OCI-LY7 (cell line): ENCODE measurements at regions of chr16 and their contacts with region 1.

Region 1: DNA sequence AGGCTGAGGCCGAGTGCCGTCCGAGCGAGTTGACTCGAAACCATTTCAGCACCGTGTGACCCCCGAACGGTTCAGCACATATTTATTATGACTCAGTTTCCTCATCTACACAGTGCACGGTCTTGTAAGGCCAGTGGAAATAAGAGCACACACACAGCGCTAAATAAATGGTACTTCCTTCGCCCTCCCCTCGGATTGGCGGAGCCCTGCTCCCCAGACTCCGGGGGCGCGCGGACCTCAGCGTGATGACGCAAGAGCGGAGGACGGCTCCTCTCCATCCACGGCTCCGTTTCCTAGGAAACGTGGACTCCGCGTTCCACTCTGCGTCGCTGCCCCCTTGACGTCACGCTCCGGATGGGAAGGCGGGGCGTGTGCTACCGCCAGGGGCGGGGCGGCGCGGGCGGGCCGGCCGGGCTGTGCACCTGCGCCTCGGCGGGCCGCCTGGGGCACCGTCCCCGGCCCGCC is at the start of gene PARD6A:
- DNase-seq: peak; percentile 100
- H3K4me3 ChIP-seq: peak within 1 kb of the TSS; percentile 83
- H3K27ac ChIP-seq: peak within 1 kb of the TSS; percentile 81
- H3K4me1 ChIP-seq: peaks cover 15% of the 10 kb centered on the region
- CTCF ChIP-seq: no peak
- total RNA-seq, gene PARD6A: 12.3 and 23.3 TPM in 2 replicates

Region 2: GRCh38 chr16:67480833-67481560 is 179.6 kb before region 1 on chr16 and contains the start of gene ATP6V0D1:
- CTCF ChIA-PET with region 1: no interaction called
- POLR2A ChIA-PET with region 1: no interaction called
- intact Hi-C with region 1: loop called (anchors 2 kb)
- DNase-seq: peak; percentile 99
- H3K4me3 ChIP-seq: peak within 1 kb of the TSS; percentile 88
- H3K27ac ChIP-seq: peak within 1 kb of the TSS; percentile 72
- H3K4me1 ChIP-seq: peaks cover 39% of the 10 kb centered on the region
- CTCF ChIP-seq: peak; percentile 88
- total RNA-seq, gene ATP6V0D1: 13.5 and 24.4 TPM in 2 replicates

Region 3: DNA sequence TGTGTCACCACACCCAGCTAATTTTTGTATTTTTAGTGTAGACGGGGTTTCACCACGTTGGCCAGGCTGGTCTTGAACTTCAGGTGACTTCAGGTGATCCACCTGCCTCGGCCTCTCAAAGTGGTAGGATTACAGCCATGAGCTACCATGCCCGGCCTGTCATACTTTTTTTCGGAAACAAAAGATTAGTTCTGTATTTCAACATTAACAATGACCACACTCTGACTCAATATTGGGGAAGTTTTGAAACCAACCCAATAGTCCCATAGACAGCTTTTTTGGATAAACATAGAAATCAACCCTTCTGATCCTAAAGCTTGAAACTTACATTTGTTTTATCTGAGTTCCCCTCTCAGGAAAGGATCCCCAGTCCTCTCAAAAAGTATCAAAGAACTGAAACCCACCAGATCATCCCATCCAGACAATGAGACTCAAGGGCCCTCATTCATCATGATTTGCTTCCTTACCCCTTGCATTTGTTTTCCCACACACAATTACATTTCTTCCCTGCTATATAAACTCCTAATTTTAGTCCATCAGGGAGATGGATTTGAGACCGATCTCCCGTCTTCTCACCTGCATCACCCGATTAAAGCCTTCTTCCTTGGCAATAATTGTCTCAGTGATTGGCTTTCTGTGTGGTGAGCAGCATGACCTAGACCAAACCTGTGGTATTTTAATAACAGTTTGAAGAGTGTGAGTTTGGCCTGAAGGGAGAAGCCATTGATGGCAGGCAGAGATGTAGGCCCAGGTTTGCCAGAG is 170.1 kb before region 1 on chr16:
- CTCF ChIA-PET with region 1: no interaction called
- POLR2A ChIA-PET with region 1: interaction called, 4 read pairs
- intact Hi-C with region 1: loop called (anchors 2 kb)
- DNase-seq: no peak
- H3K4me3 ChIP-seq: no peak overlapping the region
- H3K27ac ChIP-seq: no peak overlapping the region
- H3K4me1 ChIP-seq: peaks cover 68% of the 10 kb centered on the region
- CTCF ChIP-seq: no peak

Region 4: GRCh38 chr16:67641779-67642708 is 18.6 kb before region 1 on chr16:
- CTCF ChIA-PET with region 1: interaction called, 6 read pairs
- POLR2A ChIA-PET with region 1: interaction called, 22 read pairs
- intact Hi-C with region 1: no loop called
- DNase-seq: no peak
- H3K4me3 ChIP-seq: no peak overlapping the region
- H3K27ac ChIP-seq: no peak overlapping the region
- H3K4me1 ChIP-seq: peaks cover 25% of the 10 kb centered on the region
- CTCF ChIP-seq: no peak